A549 (cell line): ENCODE measurements at regions of chr3 and their contacts with region 1.

Region 1: GRCh38 chr3:123559040-123559861 is 25.6 kb downstream of the HACD2 start:
- DNase-seq: peak; percentile 53 to 59
- ATAC-seq: peak; percentile 30 to 62; a peak in 3 of 6 replicates
- H3K4me3 ChIP-seq: no peak overlapping the region
- H3K27ac ChIP-seq: no peak overlapping the region
- H3K4me1 ChIP-seq: no peaks in the 10 kb centered on the region
- CTCF ChIP-seq: peak; percentile 78
- EP300 ChIP-seq: no peak
- POLR2A ChIP-seq: no peak
- RAD21 ChIP-seq: peak; percentile 68 to 75

Region 2: GRCh38 chr3:123447749-123448517 is 111.3 kb before region 1 on chr3:
- CTCF ChIA-PET with region 1: interaction called, 12 read pairs
- POLR2A ChIA-PET with region 1: no interaction called
- DNase-seq: no peak
- ATAC-seq: no peak
- H3K4me3 ChIP-seq: peak overlapping the region; percentile 72
- H3K27ac ChIP-seq: peak overlapping the region in 1 of 2 experiments; percentile 37; a peak in 1 of 6 replicates
- H3K4me1 ChIP-seq: peaks cover 4% of the 10 kb centered on the region; the same call in 1 of the 3 replicates
- CTCF ChIP-seq: peak; percentile 48; the same call in 2 of the 3 replicates
- EP300 ChIP-seq: no peak
- POLR2A ChIP-seq: no peak
- RAD21 ChIP-seq: no peak

Region 3: GRCh38 chr3:123489400-123490004 is 69.7 kb before region 1 on chr3:
- CTCF ChIA-PET with region 1: interaction called, 14 read pairs
- POLR2A ChIA-PET with region 1: no interaction called
- DNase-seq: peak; percentile 60 to 68
- ATAC-seq: peak; percentile 81 to 88
- H3K4me3 ChIP-seq: no peak overlapping the region
- H3K27ac ChIP-seq: no peak overlapping the region
- H3K4me1 ChIP-seq: no peaks in the 10 kb centered on the region
- CTCF ChIP-seq: peak; percentile 87
- EP300 ChIP-seq: no peak
- POLR2A ChIP-seq: no peak
- RAD21 ChIP-seq: peak; percentile 92 to 94

Region 4: DNA sequence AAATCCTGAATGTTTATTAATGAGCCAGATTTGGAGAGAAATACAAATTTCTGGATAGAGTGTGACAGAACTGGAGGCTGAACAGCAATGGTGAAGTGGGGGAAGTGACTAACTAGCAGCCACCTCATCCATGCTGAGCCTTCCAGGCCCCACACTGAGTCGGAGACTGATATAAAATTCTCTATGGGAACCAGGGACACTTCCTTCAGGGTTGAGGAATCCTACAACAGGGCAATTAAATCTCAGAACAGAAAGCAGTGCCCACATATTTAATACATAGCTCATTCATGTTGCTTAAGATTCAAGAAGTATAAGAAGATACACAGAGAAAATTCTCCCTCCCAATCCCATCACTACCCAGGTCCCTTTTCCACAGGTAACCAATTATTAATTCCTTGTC is 23.7 kb before region 1 on chr3:
- CTCF ChIA-PET with region 1: interaction called, 13 read pairs
- POLR2A ChIA-PET with region 1: no interaction called
- DNase-seq: no peak
- ATAC-seq: no peak
- H3K4me3 ChIP-seq: no peak overlapping the region
- H3K27ac ChIP-seq: no peak overlapping the region
- H3K4me1 ChIP-seq: no peaks in the 10 kb centered on the region
- CTCF ChIP-seq: no peak
- EP300 ChIP-seq: no peak
- POLR2A ChIP-seq: no peak
- RAD21 ChIP-seq: no peak

Region 5: DNA sequence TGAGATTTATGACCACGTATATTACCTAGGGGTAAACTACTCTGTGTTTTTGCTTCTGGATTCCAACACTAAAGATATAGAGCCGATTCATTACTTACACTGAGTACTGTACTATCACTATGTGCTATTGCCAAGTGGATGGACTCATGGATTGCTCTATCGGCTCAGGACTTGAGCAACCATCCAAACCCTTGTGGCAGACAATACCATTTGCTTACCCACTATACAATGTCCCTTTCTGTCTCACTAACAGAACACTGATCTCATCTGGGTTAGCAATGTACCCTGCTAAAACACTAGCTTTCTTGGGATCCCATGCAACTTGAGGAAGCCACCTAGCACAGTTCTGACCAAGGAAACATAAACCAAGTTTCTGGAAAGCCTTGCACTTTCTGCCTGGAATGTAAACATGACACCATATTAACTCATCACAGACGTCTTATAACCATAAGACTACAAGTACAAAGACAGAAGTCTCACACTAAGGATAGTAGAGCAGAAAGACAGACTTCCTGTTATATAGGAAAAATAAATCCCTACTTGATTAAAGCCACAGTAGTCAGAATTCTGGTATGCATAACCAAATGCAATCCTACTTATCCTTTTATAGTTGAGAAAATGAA is 13.0 kb before region 1 on chr3:
- CTCF ChIA-PET with region 1: interaction called, 66 read pairs
- POLR2A ChIA-PET with region 1: no interaction called
- DNase-seq: no peak
- ATAC-seq: no peak; a peak in 1 of 6 replicates
- H3K4me3 ChIP-seq: no peak overlapping the region
- H3K27ac ChIP-seq: no peak overlapping the region
- H3K4me1 ChIP-seq: no peaks in the 10 kb centered on the region
- CTCF ChIP-seq: no peak
- EP300 ChIP-seq: no peak
- POLR2A ChIP-seq: no peak
- RAD21 ChIP-seq: no peak

Region 6: GRCh38 chr3:123576122-123576521 is 16.9 kb after region 1 on chr3:
- CTCF ChIA-PET with region 1: interaction called, 52 read pairs
- POLR2A ChIA-PET with region 1: no interaction called
- DNase-seq: no peak
- ATAC-seq: no peak
- H3K4me3 ChIP-seq: no peak overlapping the region
- H3K27ac ChIP-seq: no peak overlapping the region
- H3K4me1 ChIP-seq: no peaks in the 10 kb centered on the region
- CTCF ChIP-seq: no peak
- EP300 ChIP-seq: no peak
- POLR2A ChIP-seq: no peak
- RAD21 ChIP-seq: no peak

Region 7: GRCh38 chr3:123716411-123716810 is 157.2 kb after region 1 on chr3:
- CTCF ChIA-PET with region 1: no interaction called
- POLR2A ChIA-PET with region 1: no interaction called
- DNase-seq: no peak
- ATAC-seq: no peak
- H3K4me3 ChIP-seq: no peak overlapping the region
- H3K27ac ChIP-seq: no peak overlapping the region
- H3K4me1 ChIP-seq: peaks cover 5% of the 10 kb centered on the region; the same call in 1 of the 3 replicates
- CTCF ChIP-seq: no peak
- EP300 ChIP-seq: no peak
- POLR2A ChIP-seq: no peak
- RAD21 ChIP-seq: no peak